ENCODE measurements at regions of chr17 and their contacts with region 1.

Region 1: GRCh38 chr17:4997302-4998026 is at the starts of genes INCA1 and KIF1C:
- DNase-seq: peak; percentile 84 to 95 (median 92)
- ATAC-seq: peak; percentile 99
- H3K4me3 ChIP-seq: peak within 1 kb of the TSS; percentile 75
- H3K4me3 Mint-ChIP-seq: peak within 1 kb of the TSS; percentile 80 to 95 (median 88)
- H3K27ac ChIP-seq: peak within 1 kb of the TSS; percentile 83
- H3K27ac Mint-ChIP-seq: peak within 1 kb of the TSS; percentile 76 to 95 (median 88)
- H3K4me1 ChIP-seq: peaks cover 8 to 11% of the 10 kb centered on the region in 2 donors
- H3K4me1 Mint-ChIP-seq: peaks cover 18 to 29% (median 26%) of the 10 kb centered on the region in 7 donors
- H3K27me3 ChIP-seq: no peaks in the 10 kb centered on the region
- H3K27me3 Mint-ChIP-seq: no peaks in the 10 kb centered on the region
- total RNA-seq, gene INCA1: 0.38 to 0.42 (median 0.41) TPM in 4 of 5 experiments, not detected in the other
- total RNA-seq, gene KIF1C: 11.5 to 46.5 (median 21.0) TPM

Region 2: DNA sequence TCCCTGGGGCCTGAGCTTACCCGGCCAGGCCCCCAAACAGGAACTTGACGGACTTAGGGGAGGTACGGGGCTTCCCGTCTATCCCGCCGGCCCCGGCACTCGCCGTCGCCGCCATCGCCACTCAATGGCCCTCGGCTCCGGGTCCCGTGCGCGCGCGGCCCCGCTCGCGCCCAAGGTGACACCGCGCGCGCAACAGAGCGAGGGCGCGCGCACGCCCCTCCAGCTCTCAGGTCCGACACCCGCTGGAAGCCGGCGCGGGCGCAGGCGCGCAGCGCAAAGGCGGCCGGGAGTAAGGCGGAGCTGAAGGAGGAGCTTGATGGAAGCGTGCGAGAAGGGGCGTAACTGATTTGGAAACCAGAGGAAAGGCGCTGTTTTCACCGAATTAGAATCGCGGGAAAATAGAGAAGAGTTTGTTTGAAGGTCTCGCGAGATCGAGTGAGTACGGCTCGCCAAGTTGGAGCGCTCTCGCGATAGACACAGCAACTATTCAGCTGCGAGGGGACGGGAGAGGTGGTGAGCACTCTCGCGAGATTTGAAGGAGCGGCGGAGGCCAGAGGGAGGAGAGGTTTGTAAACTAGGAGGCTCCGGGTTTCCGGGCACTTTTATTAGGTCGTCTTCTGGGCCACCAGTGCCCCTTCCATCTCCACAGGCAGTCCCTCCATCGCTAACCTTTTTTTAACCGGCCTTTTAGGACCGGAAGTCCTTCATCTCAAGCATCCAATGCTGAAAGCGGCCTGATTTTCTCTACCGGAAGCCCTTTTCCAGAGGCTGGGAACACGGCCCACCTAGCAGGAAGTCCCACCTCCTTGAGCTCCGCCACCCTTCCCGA is 57.5 kb before region 1 on chr17 and contains the starts of genes RNF167 and SLC25A11:
- CTCF ChIA-PET with region 1: no interaction called
- POLR2A ChIA-PET with region 1: interaction called, 23 read pairs
- intact Hi-C with region 1: loop called (anchors 1 to 2 kb)
- DNase-seq: peak; percentile 86 to 99 (median 98)
- ATAC-seq: peak; percentile 94
- H3K4me3 ChIP-seq: peak within 1 kb of the TSS; percentile 89
- H3K4me3 Mint-ChIP-seq: peak within 1 kb of the TSS; percentile 92 to 100 (median 98)
- H3K27ac ChIP-seq: peak within 1 kb of the TSS; percentile 89
- H3K27ac Mint-ChIP-seq: peak within 1 kb of the TSS; percentile 89 to 98 (median 95)
- H3K4me1 ChIP-seq: peaks cover 47 to 48% of the 10 kb centered on the region in 2 donors
- H3K4me1 Mint-ChIP-seq: peaks cover 52 to 77% (median 66%) of the 10 kb centered on the region in 7 donors
- H3K27me3 ChIP-seq: no peaks in the 10 kb centered on the region
- H3K27me3 Mint-ChIP-seq: no peaks in the 10 kb centered on the region
- total RNA-seq, gene RNF167: 97.3 to 248 (median 148) TPM
- total RNA-seq, gene SLC25A11: 27.0 to 82.6 (median 44.1) TPM

Region 3: DNA sequence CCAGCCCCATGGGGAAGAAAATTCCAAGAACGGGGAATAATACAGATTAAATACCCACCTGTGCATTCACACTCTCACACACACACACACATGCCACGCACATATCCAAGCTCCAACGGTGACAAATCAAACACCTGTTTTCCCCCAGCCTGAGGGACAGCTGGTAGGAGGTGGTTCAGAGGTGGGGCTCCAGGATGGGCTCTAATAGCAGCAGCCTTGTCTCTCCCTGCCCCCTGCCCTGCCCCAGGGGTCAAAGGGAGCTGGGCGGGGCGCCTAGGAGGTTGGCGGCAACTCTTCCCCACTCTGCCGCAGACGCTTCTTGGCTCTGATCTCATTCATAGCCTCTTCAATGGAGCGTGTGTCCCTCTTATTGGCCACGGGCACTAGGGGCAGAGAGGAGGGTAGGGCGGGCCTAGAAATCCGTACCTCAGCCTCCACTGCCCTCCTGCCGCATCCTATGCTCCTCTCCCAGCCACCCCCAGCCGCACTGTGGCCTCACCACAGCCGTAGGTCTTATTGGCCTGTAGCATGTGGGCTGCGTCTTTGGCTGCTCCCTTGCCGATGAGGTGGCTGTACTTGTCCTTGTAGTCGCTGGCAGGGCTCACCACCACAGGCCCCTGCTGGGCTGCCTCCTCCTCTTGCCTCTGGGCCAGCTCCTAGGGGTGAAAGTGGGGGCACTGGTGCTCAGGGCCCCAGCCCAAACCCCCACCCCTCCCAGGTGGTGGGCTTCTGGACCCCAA is 38.0 kb before region 1 on chr17:
- CTCF ChIA-PET with region 1: no interaction called
- POLR2A ChIA-PET with region 1: no interaction called
- intact Hi-C with region 1: no loop called
- DNase-seq: no peak
- ATAC-seq: no peak
- H3K4me3 ChIP-seq: no peak overlapping the region
- H3K4me3 Mint-ChIP-seq: no peak overlapping the region
- H3K27ac ChIP-seq: no peak overlapping the region
- H3K27ac Mint-ChIP-seq: peak overlapping the region in 1 of 9 donors; percentile 54
- H3K4me1 ChIP-seq: peaks cover 0 to 7% of the 10 kb centered on the region in 2 donors
- H3K4me1 Mint-ChIP-seq: peaks cover 0 to 17% (median 11%) of the 10 kb centered on the region in 7 donors
- H3K27me3 ChIP-seq: no peaks in the 10 kb centered on the region
- H3K27me3 Mint-ChIP-seq: no peaks in the 10 kb centered on the region

Region 4: GRCh38 chr17:4980644-4981216 is 16.7 kb before region 1 on chr17:
- CTCF ChIA-PET with region 1: interaction called, 3 read pairs
- POLR2A ChIA-PET with region 1: interaction called, 6 read pairs
- intact Hi-C with region 1: loop called (anchors 2 kb)
- DNase-seq: peak in 7 of 9 donors; percentile 58 to 77 (median 74)
- ATAC-seq: peak; percentile 92
- H3K4me3 ChIP-seq: no peak overlapping the region
- H3K4me3 Mint-ChIP-seq: peak overlapping the region in 8 of 10 donors; percentile 2 to 83 (median 41)
- H3K27ac ChIP-seq: no peak overlapping the region
- H3K27ac Mint-ChIP-seq: peak overlapping the region; percentile 31 to 78 (median 67)
- H3K4me1 ChIP-seq: peaks cover 3 to 14% of the 10 kb centered on the region in 2 donors
- H3K4me1 Mint-ChIP-seq: peaks cover 13 to 34% (median 26%) of the 10 kb centered on the region in 7 donors
- H3K27me3 ChIP-seq: no peaks in the 10 kb centered on the region
- H3K27me3 Mint-ChIP-seq: no peaks in the 10 kb centered on the region

Region 5: DNA sequence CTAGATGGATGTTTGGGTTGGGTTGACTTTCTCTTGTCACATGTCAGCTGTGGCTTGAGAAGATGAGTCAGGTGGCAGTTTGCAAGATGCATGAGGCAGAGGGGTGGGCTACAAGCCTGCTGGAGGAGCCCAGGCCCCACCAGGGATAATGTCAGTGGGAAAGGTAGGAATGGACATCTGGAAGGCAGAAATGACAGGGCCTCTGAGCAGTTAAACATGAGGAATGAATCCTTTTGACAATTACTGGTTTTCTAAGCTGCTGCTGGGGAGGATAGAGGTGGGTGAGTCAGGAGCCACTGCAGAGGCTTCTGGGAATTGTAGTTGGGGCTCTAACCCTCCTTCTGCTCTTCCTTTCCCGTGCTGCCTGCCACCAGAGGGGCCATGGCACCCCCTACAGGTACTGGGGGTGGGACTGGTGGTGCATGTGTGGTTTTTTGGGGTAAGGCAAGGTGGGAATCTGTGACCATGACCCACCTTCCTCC is 22.1 kb after region 1 on chr17:
- CTCF ChIA-PET with region 1: no interaction called
- POLR2A ChIA-PET with region 1: interaction called, 3 read pairs
- intact Hi-C with region 1: loop called in 1 of 2 experiments (anchors 1 kb)
- DNase-seq: peak in 5 of 9 donors; percentile 22 to 42 (median 39)
- ATAC-seq: peak; percentile 73
- H3K4me3 ChIP-seq: no peak overlapping the region
- H3K4me3 Mint-ChIP-seq: no peak overlapping the region
- H3K27ac ChIP-seq: no peak overlapping the region
- H3K27ac Mint-ChIP-seq: peak overlapping the region in 6 of 9 donors; percentile 49 to 78 (median 73)
- H3K4me1 ChIP-seq: no peaks in the 10 kb centered on the region
- H3K4me1 Mint-ChIP-seq: peaks cover 4 to 15% (median 7%) of the 10 kb centered on the region in 7 donors
- H3K27me3 ChIP-seq: no peaks in the 10 kb centered on the region
- H3K27me3 Mint-ChIP-seq: no peaks in the 10 kb centered on the region

Region 6: DNA sequence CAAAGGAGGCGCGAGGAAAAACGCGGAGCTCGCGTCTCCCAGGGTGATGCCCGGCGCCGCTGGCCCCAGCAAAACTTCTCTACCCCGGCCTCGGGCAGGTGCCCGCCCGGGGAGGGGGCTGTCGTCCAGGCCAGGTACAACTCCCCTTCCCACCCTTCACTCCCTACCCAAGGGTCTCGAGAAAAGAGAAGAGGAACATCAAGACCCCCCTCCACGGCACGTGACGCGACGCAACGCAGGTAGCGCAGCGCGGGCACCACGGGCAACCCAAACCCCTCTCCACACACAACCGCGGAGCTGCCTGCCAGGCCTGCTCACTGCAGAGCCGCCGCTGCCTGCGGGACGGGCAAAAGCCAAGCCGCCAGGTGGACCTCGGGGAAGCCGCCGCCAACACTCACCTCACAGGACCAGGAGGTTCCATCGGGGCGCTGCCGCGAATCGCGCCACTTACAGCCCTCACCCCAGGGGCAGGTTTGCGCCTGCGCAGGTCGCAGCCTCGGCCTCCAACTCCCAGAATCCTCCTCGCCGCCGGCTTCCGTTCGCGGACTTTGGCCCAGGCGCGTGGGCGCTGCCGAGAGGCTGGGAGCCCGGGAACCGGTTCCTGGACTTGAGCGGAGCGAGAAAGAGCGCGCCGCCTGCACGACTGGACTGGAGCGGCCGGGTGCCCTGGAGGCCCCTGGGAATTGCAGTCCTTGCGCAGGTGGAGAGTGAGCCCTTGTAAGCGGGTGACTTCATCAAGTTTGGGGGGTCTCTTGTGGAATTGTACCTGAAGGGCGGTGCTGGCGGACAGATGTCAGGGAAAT is 114.1 kb after region 1 on chr17 and contains the start of gene ZNF232:
- CTCF ChIA-PET with region 1: no interaction called
- POLR2A ChIA-PET with region 1: interaction called, 3 read pairs
- intact Hi-C with region 1: loop called in 1 of 2 experiments (anchors 5 kb)
- DNase-seq: peak; percentile 83 to 95 (median 87)
- ATAC-seq: peak; percentile 94
- H3K4me3 ChIP-seq: peak within 1 kb of the TSS; percentile 80
- H3K4me3 Mint-ChIP-seq: peak within 1 kb of the TSS; percentile 82 to 96 (median 92)
- H3K27ac ChIP-seq: peak within 1 kb of the TSS; percentile 74
- H3K27ac Mint-ChIP-seq: peak within 1 kb of the TSS; percentile 59 to 96 (median 88)
- H3K4me1 ChIP-seq: peaks cover 9% of the 10 kb centered on the region in 2 donors
- H3K4me1 Mint-ChIP-seq: peaks cover 14 to 48% (median 36%) of the 10 kb centered on the region in 7 donors
- H3K27me3 ChIP-seq: peaks cover 0 to 3% of the 10 kb centered on the region in 2 donors
- H3K27me3 Mint-ChIP-seq: peaks cover 12 to 19% (median 16%) of the 10 kb centered on the region in 5 donors
- total RNA-seq, gene ZNF232: 5.1 to 20.3 (median 11.2) TPM

Measured in naive thymus-derived CD4-positive, alpha-beta T cell (primary cell).